ENCODE measurements at regions of chr10 and their contacts with region 1.

Region 1: DNA sequence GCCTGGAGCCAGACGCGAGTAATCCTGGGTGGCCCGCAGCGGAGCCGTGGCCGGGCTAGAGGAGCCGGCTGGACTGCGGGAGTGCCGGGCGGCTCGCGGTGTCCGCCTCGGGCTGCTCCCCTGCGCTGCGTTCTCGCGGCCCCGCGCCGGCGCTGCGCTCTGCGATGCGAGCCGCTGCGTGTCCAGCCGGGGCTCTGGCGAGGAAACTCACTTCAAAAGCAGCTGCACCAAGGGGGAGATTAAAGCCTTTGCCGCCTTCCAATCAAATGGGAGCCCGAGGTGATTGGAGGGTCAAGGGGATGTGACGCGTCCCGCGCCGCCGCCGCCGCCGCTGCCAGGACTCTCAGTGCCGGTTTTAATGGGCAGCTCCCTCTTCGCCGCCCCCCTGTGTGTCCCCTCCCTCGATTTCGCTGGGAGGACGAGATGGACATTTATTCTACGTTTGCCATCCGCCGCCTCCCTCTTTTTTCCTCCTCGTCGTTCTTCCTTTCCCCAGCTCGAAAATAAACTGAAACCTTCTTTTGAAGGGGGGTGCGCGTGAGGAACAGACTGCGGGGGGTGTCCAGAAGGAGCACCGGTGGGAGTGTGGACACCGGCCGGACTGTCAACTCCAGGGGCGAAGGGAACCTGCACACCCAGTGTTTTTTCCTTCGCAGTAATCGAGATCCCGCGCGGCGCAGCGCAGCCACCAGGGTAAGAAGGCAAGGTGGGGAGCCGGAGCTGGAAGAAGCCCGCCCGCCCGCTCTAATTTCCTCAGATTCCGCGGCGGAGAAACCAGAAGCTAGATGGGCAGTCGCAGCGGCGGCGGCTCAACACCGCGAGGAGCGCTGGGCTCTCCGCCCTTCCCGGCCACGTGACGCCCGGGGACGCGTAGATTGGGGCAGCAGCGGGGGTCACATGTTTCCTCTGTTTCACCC is at the start of gene ZNF503:
- DNase-seq: peak; percentile 96 to 98 (median 97)
- ATAC-seq: peak; percentile 66
- H3K4me3 ChIP-seq: peak within 1 kb of the TSS; percentile 85 to 87
- H3K27ac ChIP-seq: peak within 1 kb of the TSS; percentile 95 to 98
- H3K4me1 ChIP-seq: peaks cover 0 to 53% of the 10 kb centered on the region in 2 donors
- H3K27me3 ChIP-seq: peaks cover 0 to 96% of the 10 kb centered on the region in 2 donors
- CTCF ChIP-seq: peak in 1 of 2 donors; percentile 31
- polyA plus RNA-seq, gene ZNF503: 39.5 to 71.4 (median 52.1) TPM

Region 2: DNA sequence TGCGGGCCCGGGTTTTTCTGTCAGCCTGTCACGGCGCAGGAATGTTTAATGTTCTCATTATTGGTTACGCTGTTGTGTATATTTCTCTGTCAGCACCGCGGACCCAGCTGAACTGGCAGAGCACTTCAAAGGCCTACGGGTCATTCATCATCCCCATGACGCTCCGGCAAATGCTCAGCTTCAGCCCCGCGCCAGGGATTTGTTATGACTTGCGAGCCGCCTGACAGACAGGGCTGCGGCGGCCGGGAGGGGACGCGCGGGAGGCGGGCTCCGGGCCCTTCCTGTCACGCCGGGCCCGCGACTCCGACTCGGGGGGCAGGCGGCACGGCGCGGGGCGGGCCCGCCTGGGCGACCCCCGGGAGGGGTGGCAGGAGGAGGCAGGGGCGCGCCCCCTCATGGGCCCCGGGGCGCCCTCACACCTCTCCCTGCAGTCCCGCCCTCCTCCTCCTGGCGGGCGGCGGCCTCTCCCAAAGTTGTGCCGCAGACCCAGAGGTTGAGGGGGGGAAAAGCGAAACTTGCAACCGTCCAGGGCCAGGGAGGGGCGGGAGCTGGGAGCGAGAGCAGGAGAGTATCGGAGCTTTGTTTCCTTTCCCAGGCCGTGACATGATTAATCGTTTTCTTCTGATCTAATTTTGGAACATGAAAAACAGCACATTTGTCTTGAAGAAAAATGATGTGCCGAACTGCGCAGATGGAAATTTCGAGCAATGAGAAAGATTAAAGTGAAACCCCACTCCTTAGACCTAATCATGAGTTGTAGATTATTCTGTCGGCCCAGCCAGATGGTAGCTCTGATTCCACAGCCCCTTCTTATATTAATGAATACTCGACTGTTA is 106.7 kb before region 1 on chr10:
- intact Hi-C with region 1: loop called in 1 of 2 experiments (anchors 5 kb)
- DNase-seq: peak; percentile 85 to 94 (median 91)
- ATAC-seq: peak; percentile 88
- H3K4me3 ChIP-seq: peak overlapping the region; percentile 52 to 54
- H3K27ac ChIP-seq: peak overlapping the region; percentile 86 to 91
- H3K4me1 ChIP-seq: peaks cover 0 to 28% of the 10 kb centered on the region in 2 donors
- H3K27me3 ChIP-seq: peaks cover 0 to 40% of the 10 kb centered on the region in 2 donors
- CTCF ChIP-seq: peak in 1 of 2 donors; percentile 40

Region 3: GRCh38 chr10:75508239-75508813 is 106.5 kb after region 1 on chr10:
- intact Hi-C with region 1: no loop called
- DNase-seq: peak in 1 of 4 donors; percentile 37
- ATAC-seq: peak; percentile 45
- H3K4me3 ChIP-seq: no peak overlapping the region
- H3K27ac ChIP-seq: no peak overlapping the region
- H3K4me1 ChIP-seq: peaks cover 11 to 46% of the 10 kb centered on the region in 2 donors
- H3K27me3 ChIP-seq: no peaks in the 10 kb centered on the region
- CTCF ChIP-seq: no peak

Region 4: GRCh38 chr10:75910032-75910431 is 508.2 kb after region 1 on chr10:
- intact Hi-C with region 1: loop called in 1 of 2 experiments (anchors 10 kb)
- DNase-seq: peak in 1 of 4 donors; percentile 44
- ATAC-seq: peak; percentile 37
- H3K4me3 ChIP-seq: no peak overlapping the region
- H3K27ac ChIP-seq: no peak overlapping the region
- H3K4me1 ChIP-seq: no peaks in the 10 kb centered on the region
- H3K27me3 ChIP-seq: no peaks in the 10 kb centered on the region
- CTCF ChIP-seq: peak; percentile 29 to 48

Region 5: DNA sequence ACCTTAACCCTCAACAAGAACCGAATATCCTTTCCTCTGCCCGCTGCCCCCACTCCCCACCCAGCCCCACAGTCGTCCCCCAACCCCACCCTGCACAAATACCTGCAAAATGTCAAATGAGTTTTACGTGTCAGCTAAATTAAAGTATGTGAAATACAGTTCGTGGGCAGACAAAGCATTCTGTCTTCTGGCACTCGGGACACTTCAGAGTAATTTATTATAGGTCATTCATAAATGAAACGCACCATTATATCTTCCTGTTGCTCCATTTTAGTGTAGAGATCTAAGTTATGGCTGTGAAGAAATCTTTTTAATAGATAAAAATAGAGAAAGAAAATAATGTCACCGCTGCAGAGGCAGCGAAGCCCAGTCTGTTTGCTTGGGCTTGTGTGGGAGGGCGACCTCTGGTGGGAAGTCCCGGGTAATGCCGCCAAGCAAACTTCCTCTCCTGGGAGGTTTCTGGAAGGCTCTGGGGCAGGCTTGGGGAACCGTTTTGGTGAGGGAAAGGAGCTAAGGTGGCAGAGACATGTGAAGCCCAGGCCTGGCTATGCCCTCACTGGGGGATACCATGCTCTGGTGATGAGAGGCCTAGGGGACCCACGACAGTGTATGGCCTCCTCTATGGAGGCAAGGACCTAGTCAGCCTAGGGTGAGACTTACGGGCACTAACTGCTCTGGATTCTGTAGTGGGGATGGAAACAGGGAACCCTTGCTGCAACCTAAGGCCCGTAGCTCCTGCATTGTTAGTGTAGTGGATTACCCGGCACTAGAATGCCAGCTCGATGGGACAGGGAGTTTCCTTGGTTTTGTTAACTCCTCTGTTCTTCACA is 634.5 kb after region 1 on chr10:
- intact Hi-C with region 1: loop called in 1 of 2 experiments (anchors 5 kb)
- DNase-seq: peak; percentile 74 to 88 (median 80)
- ATAC-seq: peak; percentile 97
- H3K4me3 ChIP-seq: no peak overlapping the region
- H3K27ac ChIP-seq: no peak overlapping the region
- H3K4me1 ChIP-seq: peaks cover 6 to 32% of the 10 kb centered on the region in 2 donors
- H3K27me3 ChIP-seq: no peaks in the 10 kb centered on the region
- CTCF ChIP-seq: peak; percentile 86 to 91

Region 6: DNA sequence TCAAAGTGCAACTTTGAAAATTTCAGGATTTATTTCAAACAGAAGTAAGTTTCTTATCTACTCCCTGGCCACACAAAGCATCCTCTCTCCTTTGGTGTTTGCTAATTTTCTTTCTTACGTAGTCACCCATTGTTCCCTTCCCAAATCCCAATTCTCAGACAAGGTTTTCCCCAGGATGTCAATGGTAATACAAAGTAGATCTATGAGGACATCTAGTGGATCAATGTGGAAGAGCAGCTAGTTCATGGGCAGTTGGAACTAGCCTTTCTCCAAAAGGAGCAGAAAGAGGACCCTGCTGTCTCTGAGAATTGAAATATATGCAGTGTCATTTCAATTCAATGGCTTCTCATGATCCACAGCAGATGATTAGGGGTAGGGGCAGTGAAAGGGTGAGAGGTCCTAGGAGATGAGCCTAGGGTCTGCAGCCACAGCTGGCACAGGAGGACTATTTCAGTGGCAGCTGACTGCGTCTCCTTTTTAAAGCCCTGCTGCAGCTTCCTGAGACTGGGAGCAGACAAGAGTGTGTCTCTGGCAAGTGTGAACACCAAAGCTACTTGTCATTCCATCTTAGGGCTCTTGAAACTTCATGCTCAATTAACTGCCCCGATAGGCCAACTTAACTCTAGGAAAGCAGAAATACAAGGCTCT is 1603.2 kb after region 1 on chr10:
- intact Hi-C with region 1: loop called in 1 of 2 experiments (anchors 10 kb)
- DNase-seq: peak in 2 of 4 donors; percentile 81
- ATAC-seq: peak; percentile 90
- H3K4me3 ChIP-seq: no peak overlapping the region
- H3K27ac ChIP-seq: peak overlapping the region in 1 of 2 donors; percentile 11
- H3K4me1 ChIP-seq: no peaks in the 10 kb centered on the region
- H3K27me3 ChIP-seq: no peaks in the 10 kb centered on the region
- CTCF ChIP-seq: peak; percentile 58 to 78

Measured in left lung (tissue), 14 donors.